Right cardiac atrium (tissue), 5 donors: ENCODE measurements at regions of chr6 and their contacts with region 1.

Region 1: GRCh38 chr6:12289933-12290820 is at the start of gene EDN1:
- DNase-seq: peak; percentile 80 to 90 (median 89)
- ATAC-seq: peak; percentile 91 to 94
- H3K4me3 ChIP-seq: peak within 1 kb of the TSS; percentile 72
- H3K27ac ChIP-seq: peak within 1 kb of the TSS; percentile 66
- H3K4me1 ChIP-seq: no peaks in the 10 kb centered on the region
- H3K27me3 ChIP-seq: no peaks in the 10 kb centered on the region
- total RNA-seq, gene EDN1: 1.3 to 5.8 (median 2.0) TPM

Region 2: DNA sequence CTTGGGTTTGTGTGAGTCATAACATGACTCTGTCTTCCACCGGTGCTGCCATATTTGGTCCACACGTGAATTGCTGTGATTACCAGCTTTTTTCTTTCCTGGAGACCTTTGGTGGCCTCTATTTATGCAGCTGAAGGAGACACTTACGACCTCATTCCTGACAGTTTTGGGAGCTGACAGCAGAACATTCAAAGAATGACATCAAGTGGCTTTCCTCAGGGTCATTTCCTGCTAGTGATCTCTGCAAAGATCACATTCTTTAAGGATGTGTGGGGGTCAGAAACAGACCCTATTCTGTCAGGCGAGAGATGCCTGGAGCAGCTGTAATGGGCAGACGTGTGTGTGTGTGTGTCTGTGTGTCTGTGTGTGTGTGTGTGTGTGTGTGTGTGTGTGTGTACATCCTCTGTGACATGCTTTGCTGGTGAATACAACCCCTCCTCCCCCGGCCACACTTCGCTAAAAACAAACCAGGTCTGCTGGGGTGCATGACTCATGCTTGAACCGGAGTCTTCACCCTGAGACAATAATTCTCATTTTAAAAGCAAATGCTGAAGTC is 637.1 kb before region 1 on chr6:
- intact Hi-C with region 1: loop called in 1 of 4 experiments (anchors 5 kb)
- DNase-seq: peak in 1 of 3 donors; percentile 28
- ATAC-seq: peak in 1 of 2 donors; percentile 54
- H3K4me3 ChIP-seq: no peak overlapping the region
- H3K27ac ChIP-seq: peak overlapping the region; percentile 16
- H3K4me1 ChIP-seq: no peaks in the 10 kb centered on the region
- H3K27me3 ChIP-seq: no peaks in the 10 kb centered on the region